Gastrocnemius medialis (tissue), 4 donors: ENCODE measurements at regions of chr10 and their contacts with region 1.

Region 1: GRCh38 chr10:110007701-110008517 is at the start of gene ADD3:
- DNase-seq: peak; percentile 85
- ATAC-seq: peak; percentile 75 to 80
- H3K4me3 ChIP-seq: peak within 1 kb of the TSS; percentile 89 to 98 (median 94)
- H3K27ac ChIP-seq: peak within 1 kb of the TSS; percentile 82 to 89 (median 86)
- H3K4me1 ChIP-seq: peaks cover 11 to 19% of the 10 kb centered on the region in 2 donors
- H3K27me3 ChIP-seq: no peaks in the 10 kb centered on the region
- CTCF ChIP-seq: no peak
- POLR2A ChIP-seq: peak; percentile 26 to 59
- total RNA-seq, gene ADD3: 16.0 to 31.3 (median 18.4) TPM

Region 2: DNA sequence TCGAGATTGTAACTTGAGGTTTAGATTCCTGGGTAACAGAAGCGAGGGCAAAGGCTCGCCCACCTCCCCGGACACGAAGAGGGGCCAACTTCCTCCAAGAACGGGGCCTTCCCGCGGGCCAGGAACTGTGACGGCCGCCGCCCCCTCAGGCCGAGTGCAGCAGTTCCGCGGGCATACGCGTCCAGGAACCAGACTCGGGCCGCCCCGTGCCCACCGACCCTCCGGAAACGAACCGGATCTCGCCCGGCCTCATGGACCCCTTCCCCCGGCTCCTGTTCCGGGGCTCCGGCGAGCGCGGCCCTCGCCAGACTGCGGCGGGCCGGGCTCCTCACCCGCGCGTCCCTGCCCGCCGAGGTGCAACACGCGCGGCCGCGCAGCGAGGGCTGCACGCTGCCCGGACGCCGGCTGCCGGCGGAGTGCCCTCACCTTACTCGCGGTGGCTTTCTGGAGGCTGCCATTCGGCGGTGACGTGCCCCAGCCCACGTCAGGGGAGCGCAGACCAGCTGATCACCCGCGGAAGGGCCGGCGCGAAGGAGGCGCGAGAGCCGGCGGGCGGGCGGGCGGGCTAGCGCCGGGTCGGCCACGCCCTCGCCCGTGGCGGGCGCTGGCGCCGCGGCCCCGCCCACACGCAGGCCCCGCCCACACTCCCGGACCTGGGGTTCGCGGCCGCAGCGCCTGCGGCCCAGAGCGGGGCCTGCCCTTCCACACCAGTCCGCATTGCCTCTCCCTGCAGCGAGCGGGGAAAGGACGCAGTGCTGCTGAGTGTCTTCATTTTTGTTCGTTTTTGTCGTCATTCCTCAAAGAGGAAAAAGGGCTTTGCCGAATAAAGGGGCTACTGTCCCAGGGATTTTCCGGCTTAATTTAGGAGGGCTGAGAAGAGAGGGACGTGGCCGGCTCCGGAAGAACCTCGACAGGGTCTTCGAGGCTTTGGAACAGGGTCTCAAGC is 84.7 kb before region 1 on chr10 and contains the start of gene XPNPEP1:
- in situ Hi-C with region 1: no loop called
- intact Hi-C with region 1: loop called (anchors 5 kb)
- DNase-seq: peak; percentile 81 to 84
- ATAC-seq: peak; percentile 95 to 96
- H3K4me3 ChIP-seq: peak within 1 kb of the TSS; percentile 75 to 92 (median 87)
- H3K27ac ChIP-seq: peak within 1 kb of the TSS; percentile 88 to 94 (median 93)
- H3K4me1 ChIP-seq: peaks cover 11 to 14% of the 10 kb centered on the region in 2 donors
- H3K27me3 ChIP-seq: no peaks in the 10 kb centered on the region
- CTCF ChIP-seq: no peak
- POLR2A ChIP-seq: peak; percentile 92 to 95
- total RNA-seq, gene XPNPEP1: 39.9 to 72.3 (median 64.0) TPM

Region 3: GRCh38 chr10:110076559-110077318 is 68.8 kb after region 1 on chr10:
- in situ Hi-C with region 1: no loop called
- intact Hi-C with region 1: loop called (anchors 5 kb)
- DNase-seq: peak; percentile 50 to 53
- ATAC-seq: peak; percentile 81
- H3K4me3 ChIP-seq: peak overlapping the region; percentile 2 to 29 (median 10)
- H3K27ac ChIP-seq: peak overlapping the region; percentile 15 to 67 (median 45)
- H3K4me1 ChIP-seq: peaks cover 44 to 54% of the 10 kb centered on the region in 2 donors
- H3K27me3 ChIP-seq: no peaks in the 10 kb centered on the region
- CTCF ChIP-seq: no peak
- POLR2A ChIP-seq: no peak

Region 4: DNA sequence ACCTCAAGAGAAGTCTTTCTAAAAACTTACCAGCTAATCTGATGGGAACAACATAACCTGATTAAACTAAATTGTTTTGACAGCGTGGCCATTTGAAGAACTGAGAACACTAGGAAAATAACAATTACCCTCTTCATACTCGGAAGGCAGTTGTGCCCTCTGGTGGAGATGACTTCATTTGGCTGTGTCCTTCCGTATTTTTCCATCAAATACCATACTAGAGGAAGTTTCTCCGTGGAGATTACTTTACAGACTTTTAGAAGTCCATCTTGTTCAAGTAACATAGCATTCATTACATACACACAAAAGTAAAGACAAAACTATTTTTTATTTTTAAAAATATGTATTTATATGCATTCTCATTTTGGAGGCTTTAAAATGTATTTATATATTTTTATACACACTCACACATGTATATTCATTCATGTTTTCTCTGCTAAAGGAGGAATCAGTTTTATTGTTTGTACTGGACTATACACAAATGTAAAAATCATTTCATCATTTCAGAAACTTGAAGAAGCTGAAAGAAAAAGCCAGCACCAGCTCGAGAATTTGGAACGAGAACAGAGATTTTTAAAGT is 271.6 kb after region 1 on chr10:
- in situ Hi-C with region 1: no loop called
- intact Hi-C with region 1: loop called (anchors 10 kb)
- DNase-seq: peak; percentile 12 to 40
- ATAC-seq: peak; percentile 69 to 87
- H3K4me3 ChIP-seq: no peak overlapping the region
- H3K27ac ChIP-seq: peak overlapping the region in 1 of 4 donors; percentile 1
- H3K4me1 ChIP-seq: peaks cover 18 to 26% of the 10 kb centered on the region in 2 donors
- H3K27me3 ChIP-seq: no peaks in the 10 kb centered on the region
- CTCF ChIP-seq: peak; percentile 69 to 78 (median 74)
- POLR2A ChIP-seq: no peak

Region 5: GRCh38 chr10:110535958-110536891 is 528.3 kb after region 1 on chr10:
- in situ Hi-C with region 1: no loop called
- intact Hi-C with region 1: no loop called
- DNase-seq: no peak
- ATAC-seq: peak in 1 of 2 donors; percentile 36
- H3K4me3 ChIP-seq: no peak overlapping the region
- H3K27ac ChIP-seq: no peak overlapping the region
- H3K4me1 ChIP-seq: no peaks in the 10 kb centered on the region
- H3K27me3 ChIP-seq: peaks cover 0 to 22% (median 4%) of the 10 kb centered on the region in 3 donors
- CTCF ChIP-seq: peak in 1 of 5 experiments; percentile 11
- POLR2A ChIP-seq: no peak